CD4-positive, alpha-beta T cell (primary cell): ENCODE measurements at regions of chr1 and their contacts with region 1.

Region 1: GRCh38 chr1:115980998-115981993 is 5.0 kb downstream of the SLC22A15 start:
- DNase-seq: peak in 3 of 14 experiments; percentile 40 to 50 (median 41)
- ATAC-seq: no peak
- H3K4me3 ChIP-seq: no peak overlapping the region
- H3K4me3 Mint-ChIP-seq: no peak overlapping the region
- H3K27ac ChIP-seq: no peak overlapping the region
- H3K27ac Mint-ChIP-seq: no peak overlapping the region
- H3K4me1 ChIP-seq: peaks cover 2% of the 10 kb centered on the region
- H3K4me1 Mint-ChIP-seq: peaks cover 6% of the 10 kb centered on the region
- H3K27me3 ChIP-seq: peaks cover 0 to 20% of the 10 kb centered on the region in 2 experiments
- H3K27me3 Mint-ChIP-seq: peaks cover 29% of the 10 kb centered on the region
- CTCF ChIP-seq: peak; percentile 56

Region 2: DNA sequence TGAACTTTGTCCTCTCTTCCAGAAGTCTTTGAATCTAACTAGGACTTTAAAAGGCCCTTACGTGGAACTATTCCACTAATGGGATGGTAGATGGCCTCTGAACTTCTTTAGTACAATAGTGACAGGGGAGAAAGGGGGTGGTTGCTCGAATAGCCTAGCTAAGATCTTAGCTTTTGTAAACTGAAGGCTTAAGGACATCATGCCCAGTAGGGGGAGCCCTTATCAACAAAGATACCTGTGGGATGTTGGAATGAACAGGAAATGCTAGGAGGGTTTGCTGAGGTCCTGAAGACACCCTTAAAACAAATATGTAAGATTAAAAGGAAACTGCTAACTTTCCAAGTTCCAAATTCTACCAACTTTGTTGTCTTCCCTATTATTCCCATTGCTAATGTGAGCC is 173.6 kb before region 1 on chr1:
- CTCF ChIA-PET with region 1: no interaction called
- POLR2A ChIA-PET with region 1: no interaction called
- intact Hi-C with region 1: loop called in 1 of 2 experiments (anchors 5 kb)
- DNase-seq: peak in 7 of 14 experiments; percentile 3 to 69 (median 28)
- ATAC-seq: peak; percentile 41
- H3K4me3 ChIP-seq: no peak overlapping the region
- H3K4me3 Mint-ChIP-seq: no peak overlapping the region
- H3K27ac ChIP-seq: no peak overlapping the region
- H3K27ac Mint-ChIP-seq: no peak overlapping the region
- H3K4me1 ChIP-seq: no peaks in the 10 kb centered on the region
- H3K4me1 Mint-ChIP-seq: no peaks in the 10 kb centered on the region
- H3K27me3 ChIP-seq: peaks cover 0 to 15% of the 10 kb centered on the region in 2 experiments
- H3K27me3 Mint-ChIP-seq: peaks cover 28% of the 10 kb centered on the region
- CTCF ChIP-seq: peak; percentile 46

Region 3: DNA sequence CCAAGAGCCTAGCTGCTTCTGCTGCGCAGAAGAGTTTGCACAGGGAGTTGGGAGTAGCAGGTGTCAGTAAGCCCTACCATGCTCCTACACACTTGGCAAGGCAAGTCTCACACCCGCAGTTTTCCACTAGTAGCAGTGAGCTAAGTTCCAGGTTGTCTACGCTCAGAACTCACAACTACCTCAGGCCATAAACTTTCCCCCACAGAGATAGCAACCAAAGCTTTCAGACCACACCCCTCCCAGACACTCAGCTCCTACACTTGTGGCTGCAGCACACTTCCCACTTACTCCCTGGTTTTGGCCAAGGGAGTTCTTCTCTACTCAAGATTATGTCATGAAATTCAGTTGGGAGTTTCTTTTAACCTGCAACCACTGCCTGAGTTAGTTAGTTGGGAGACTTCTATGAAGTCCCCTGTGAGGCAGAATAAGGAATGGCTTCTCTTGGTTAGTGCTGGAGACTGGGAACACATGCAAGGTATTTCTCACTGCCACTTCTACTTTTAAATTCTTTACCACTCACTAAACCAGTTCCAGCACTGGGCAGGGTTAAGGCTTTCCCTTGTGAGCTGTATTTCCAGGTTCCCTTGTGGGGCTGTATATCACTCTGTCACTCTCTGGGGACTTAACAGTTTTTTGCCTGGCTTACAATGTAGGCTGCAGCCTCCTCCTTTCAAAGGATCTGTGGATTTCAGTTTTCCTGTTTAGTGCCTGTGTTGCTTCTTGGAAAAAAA is 111.6 kb after region 1 on chr1:
- CTCF ChIA-PET with region 1: no interaction called
- POLR2A ChIA-PET with region 1: no interaction called
- intact Hi-C with region 1: no loop called
- DNase-seq: no peak
- ATAC-seq: no peak
- H3K4me3 ChIP-seq: no peak overlapping the region
- H3K4me3 Mint-ChIP-seq: no peak overlapping the region
- H3K27ac ChIP-seq: no peak overlapping the region
- H3K27ac Mint-ChIP-seq: no peak overlapping the region
- H3K4me1 ChIP-seq: no peaks in the 10 kb centered on the region
- H3K4me1 Mint-ChIP-seq: no peaks in the 10 kb centered on the region
- H3K27me3 ChIP-seq: peaks cover 3 to 13% of the 10 kb centered on the region in 2 experiments
- H3K27me3 Mint-ChIP-seq: peaks cover 61% of the 10 kb centered on the region
- CTCF ChIP-seq: no peak